ENCODE measurements at regions of chr13 and their contacts with region 1.

Region 1: DNA sequence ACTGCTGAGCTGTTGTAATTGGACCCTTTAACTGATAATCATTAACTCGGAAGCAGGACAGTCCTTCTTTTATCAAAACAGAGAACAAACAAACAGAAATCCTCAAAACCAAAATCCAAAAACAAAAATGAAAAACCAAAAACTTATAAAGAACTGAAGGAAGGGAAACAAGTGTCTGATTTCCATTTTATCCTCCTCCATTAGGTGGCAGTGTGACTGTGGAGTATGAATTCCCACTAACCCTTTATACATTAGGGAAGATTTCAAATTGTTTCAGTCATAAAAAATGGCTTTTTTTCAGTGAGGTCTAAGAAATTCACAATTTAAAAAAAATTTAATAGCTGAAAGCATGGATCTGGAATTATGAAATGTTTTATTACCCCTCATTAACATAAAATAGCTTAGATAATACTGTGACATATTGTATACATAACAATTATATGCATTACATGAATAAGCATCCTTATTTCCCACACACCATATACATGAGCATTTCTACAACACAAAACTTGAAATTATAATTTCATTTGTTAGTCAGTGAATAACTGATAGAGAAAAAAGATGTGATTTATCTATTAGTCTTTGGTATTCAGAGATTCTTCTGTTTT is 1074.3 kb upstream of the PCDH9 start:
- DNase-seq: peak; percentile 30
- ATAC-seq: no peak
- H3K4me3 ChIP-seq: no peak overlapping the region
- H3K27ac ChIP-seq: no peak overlapping the region; the same call in 1 of the 2 replicates
- H3K4me1 ChIP-seq: no peaks in the 10 kb centered on the region
- H3K27me3 ChIP-seq: no peaks in the 10 kb centered on the region
- CTCF ChIP-seq: peak; percentile 57; the same call in 1 of the 2 replicates

Region 2: DNA sequence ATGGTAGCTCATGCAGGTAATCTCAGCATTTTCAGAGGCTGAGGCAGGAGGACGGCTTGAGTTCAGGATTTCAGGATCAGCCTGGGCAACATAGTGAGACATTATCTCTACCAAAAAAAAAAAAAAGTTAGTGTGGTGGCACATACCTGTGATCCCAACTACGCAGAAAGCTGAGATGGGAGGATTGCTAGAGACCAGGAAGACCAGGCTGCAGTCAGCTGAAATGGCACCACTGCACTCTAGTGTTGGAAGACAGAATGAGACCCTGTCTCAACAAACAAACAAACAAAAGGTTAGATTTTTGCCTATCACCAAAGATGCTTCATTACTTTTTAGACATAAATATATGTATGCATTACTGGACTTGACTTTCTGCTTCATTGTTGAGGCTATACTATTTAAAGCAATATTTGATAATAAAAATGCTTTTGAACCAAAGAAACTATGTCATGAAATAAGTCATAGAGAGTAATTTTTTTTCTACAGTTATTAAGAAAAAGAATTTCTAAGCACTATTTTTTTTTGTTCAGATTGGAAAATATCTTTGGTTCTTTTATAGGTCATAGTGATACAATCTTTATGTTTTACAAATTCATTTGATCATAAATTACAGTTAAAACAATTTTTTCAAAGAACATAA is 623.1 kb after region 1 on chr13:
- CTCF ChIA-PET with region 1: no interaction called
- POLR2A ChIA-PET with region 1: no interaction called
- in situ Hi-C with region 1: no loop called
- intact Hi-C with region 1: loop called (anchors 10 kb)
- DNase-seq: peak; percentile 38
- ATAC-seq: peak; percentile 78; the same call in 1 of the 2 replicates
- H3K4me3 ChIP-seq: no peak overlapping the region
- H3K27ac ChIP-seq: no peak overlapping the region
- H3K4me1 ChIP-seq: no peaks in the 10 kb centered on the region
- H3K27me3 ChIP-seq: no peaks in the 10 kb centered on the region
- CTCF ChIP-seq: peak; percentile 73

Region 3: GRCh38 chr13:69324090-69324886 is 1019.9 kb after region 1 on chr13:
- CTCF ChIA-PET with region 1: no interaction called
- POLR2A ChIA-PET with region 1: no interaction called
- in situ Hi-C with region 1: no loop called
- intact Hi-C with region 1: loop called (anchors 5 kb)
- DNase-seq: no peak
- ATAC-seq: no peak
- H3K4me3 ChIP-seq: no peak overlapping the region
- H3K27ac ChIP-seq: no peak overlapping the region
- H3K4me1 ChIP-seq: no peaks in the 10 kb centered on the region
- H3K27me3 ChIP-seq: no peaks in the 10 kb centered on the region
- CTCF ChIP-seq: peak; percentile 19; the same call in 1 of the 2 replicates